GM12878 (cell line): ENCODE measurements at regions of chr9 and their contacts with region 1.

Region 1: DNA sequence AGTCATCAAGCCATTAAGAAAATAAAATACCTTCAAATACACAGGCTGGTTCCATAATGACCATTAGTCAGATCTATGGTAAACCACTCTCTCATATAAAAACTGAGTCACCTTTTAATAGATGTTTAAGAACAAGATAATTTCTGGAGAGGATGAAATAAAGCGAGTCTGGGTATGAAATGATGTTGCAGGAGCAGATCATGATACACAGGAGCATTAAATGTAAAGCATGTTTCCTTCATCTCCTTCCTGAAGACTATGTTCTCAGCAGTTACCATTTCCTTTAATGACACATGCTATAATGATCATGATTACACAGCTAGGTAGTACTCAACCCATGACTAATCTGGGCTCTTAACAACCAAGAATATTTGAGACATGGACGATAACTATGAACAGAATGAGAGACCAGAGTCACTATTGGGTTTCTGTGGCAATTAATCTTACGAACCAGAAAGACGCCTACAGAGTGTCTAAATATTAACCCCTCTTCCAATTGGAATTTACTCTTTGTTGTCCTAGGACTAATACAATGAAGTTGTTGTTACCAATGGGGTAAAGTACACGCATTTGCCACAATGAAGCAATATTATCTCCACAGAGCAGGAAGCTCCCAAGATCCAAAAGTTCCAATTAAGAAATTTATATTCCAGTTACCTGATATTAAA is 105.6 kb downstream of the NR6A1 start:
- DNase-seq: no peak
- ATAC-seq: peak; percentile 12; the same call in 2 of the 3 replicates
- H3K4me3 ChIP-seq: no peak overlapping the region
- H3K27ac ChIP-seq: no peak overlapping the region
- H3K4me1 ChIP-seq: no peaks in the 10 kb centered on the region
- H3K27me3 ChIP-seq: no peaks in the 10 kb centered on the region
- CTCF ChIP-seq: no peak
- EP300 ChIP-seq: no peak
- POLR2A ChIP-seq: no peak
- RAD21 ChIP-seq: no peak

Region 2: DNA sequence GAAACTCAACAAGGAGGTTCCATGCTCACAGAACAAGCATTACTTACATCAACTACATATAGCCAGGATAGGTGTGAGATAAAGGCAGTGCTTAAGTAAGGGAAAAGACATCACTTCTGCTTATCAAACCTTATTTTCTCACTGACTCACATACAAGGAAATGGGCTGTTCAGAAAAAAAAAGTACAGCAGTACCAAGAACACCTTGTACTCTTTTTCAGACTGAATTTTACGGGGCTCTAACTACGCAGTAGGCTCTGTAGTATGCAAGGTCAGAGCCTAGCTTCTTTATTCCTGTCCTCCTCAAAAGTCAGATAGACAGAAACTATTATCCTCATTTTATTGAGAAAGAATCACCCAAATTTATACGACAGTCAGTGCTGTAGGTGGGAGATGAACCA is 256.1 kb before region 1 on chr9:
- CTCF ChIA-PET with region 1: no interaction called
- POLR2A ChIA-PET with region 1: no interaction called
- RAD21 ChIA-PET with region 1: no interaction called
- SMC1A ChIA-PET with region 1: no interaction called
- in situ Hi-C with region 1: no loop called
- intact Hi-C with region 1: no loop called
- DNase-seq: no peak
- ATAC-seq: no peak
- H3K4me3 ChIP-seq: no peak overlapping the region
- H3K27ac ChIP-seq: no peak overlapping the region
- H3K4me1 ChIP-seq: no peaks in the 10 kb centered on the region
- H3K27me3 ChIP-seq: no peaks in the 10 kb centered on the region
- CTCF ChIP-seq: no peak
- EP300 ChIP-seq: no peak
- POLR2A ChIP-seq: no peak
- RAD21 ChIP-seq: no peak

Region 3: GRCh38 chr9:124652203-124652992 is 13.1 kb before region 1 on chr9:
- CTCF ChIA-PET with region 1: no interaction called
- POLR2A ChIA-PET with region 1: interaction called, 17 read pairs
- RAD21 ChIA-PET with region 1: interaction called, 3 read pairs
- SMC1A ChIA-PET with region 1: interaction called, 13 read pairs
- in situ Hi-C with region 1: no loop called
- intact Hi-C with region 1: no loop called
- DNase-seq: no peak
- ATAC-seq: no peak
- H3K4me3 ChIP-seq: no peak overlapping the region
- H3K27ac ChIP-seq: no peak overlapping the region
- H3K4me1 ChIP-seq: no peaks in the 10 kb centered on the region
- H3K27me3 ChIP-seq: no peaks in the 10 kb centered on the region
- CTCF ChIP-seq: no peak
- EP300 ChIP-seq: no peak
- POLR2A ChIP-seq: no peak
- RAD21 ChIP-seq: no peak